Activated T-helper 2 cell treated with anti-CD3 and anti-CD28 coated beads, Interferon-gamma antibody, Interleukin-2, Interleukin-4, amounts not matched to agents 10 μg/mL and 5 μg/mL and 100 μg/mL, durations not matched to agents 14 hours and 24 hours and 36 hours (primary cell): ENCODE measurements at regions of chr3 and their contacts with region 1.

Region 1: GRCh38 chr3:73056014-73056844 is 5.2 kb upstream of the EBLN2 start:
- DNase-seq: no peak
- H3K4me3 Mint-ChIP-seq: no peak overlapping the region
- H3K27ac Mint-ChIP-seq: peak overlapping the region; percentile 1
- H3K4me1 Mint-ChIP-seq: peaks cover 20% of the 10 kb centered on the region
- H3K27me3 Mint-ChIP-seq: no peaks in the 10 kb centered on the region

Region 2: GRCh38 chr3:72938471-72939265 is 117.6 kb before region 1 on chr3:
- intact Hi-C with region 1: loop called (anchors 1 kb)
- DNase-seq: no peak
- H3K4me3 Mint-ChIP-seq: no peak overlapping the region
- H3K27ac Mint-ChIP-seq: no peak overlapping the region
- H3K4me1 Mint-ChIP-seq: no peaks in the 10 kb centered on the region
- H3K27me3 Mint-ChIP-seq: peaks cover 23% of the 10 kb centered on the region

Region 3: GRCh38 chr3:73228437-73228836 is 172.2 kb after region 1 on chr3:
- intact Hi-C with region 1: no loop called
- DNase-seq: no peak
- H3K4me3 Mint-ChIP-seq: no peak overlapping the region
- H3K27ac Mint-ChIP-seq: no peak overlapping the region
- H3K4me1 Mint-ChIP-seq: no peaks in the 10 kb centered on the region
- H3K27me3 Mint-ChIP-seq: no peaks in the 10 kb centered on the region